ENCODE measurements at regions of chr5 and their contacts with region 1.

Region 1: GRCh38 chr5:55407059-55407684 is 99.4 kb downstream of the MTREX start:
- DNase-seq: no peak
- ATAC-seq: peak; percentile 66 to 87 (median 77)
- H3K4me3 ChIP-seq: no peak overlapping the region
- H3K27ac ChIP-seq: no peak overlapping the region
- H3K4me1 ChIP-seq: peaks cover 0 to 13% (median 0%) of the 10 kb centered on the region in 12 donors
- H3K27me3 ChIP-seq: no peaks in the 10 kb centered on the region
- CTCF ChIP-seq: peak; percentile 61 to 90 (median 76)
- POLR2A ChIP-seq: no peak

Region 2: DNA sequence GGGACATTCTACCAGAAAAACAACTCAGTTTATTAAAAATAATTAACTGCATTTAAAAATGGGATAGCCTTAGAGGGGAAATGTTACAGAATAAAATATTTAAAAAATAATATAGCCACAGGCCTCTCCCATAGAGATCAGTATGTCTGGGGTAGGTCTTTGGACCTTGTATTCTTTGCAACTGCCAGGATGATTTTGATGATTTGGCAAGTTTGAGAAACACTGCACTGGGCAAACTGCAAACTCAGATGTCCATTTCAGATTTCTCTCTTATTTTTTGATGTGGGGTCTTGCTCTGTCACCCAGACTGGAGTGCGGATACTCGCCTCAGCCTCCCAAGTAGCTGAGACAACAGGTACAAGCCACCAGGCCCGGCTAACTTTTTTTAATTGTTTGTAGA is 148.8 kb before region 1 on chr5:
- intact Hi-C with region 1: no loop called
- DNase-seq: no peak
- ATAC-seq: no peak
- H3K4me3 ChIP-seq: no peak overlapping the region
- H3K27ac ChIP-seq: no peak overlapping the region
- H3K4me1 ChIP-seq: no peaks in the 10 kb centered on the region
- H3K27me3 ChIP-seq: no peaks in the 10 kb centered on the region
- CTCF ChIP-seq: no peak
- POLR2A ChIP-seq: no peak

Region 3: DNA sequence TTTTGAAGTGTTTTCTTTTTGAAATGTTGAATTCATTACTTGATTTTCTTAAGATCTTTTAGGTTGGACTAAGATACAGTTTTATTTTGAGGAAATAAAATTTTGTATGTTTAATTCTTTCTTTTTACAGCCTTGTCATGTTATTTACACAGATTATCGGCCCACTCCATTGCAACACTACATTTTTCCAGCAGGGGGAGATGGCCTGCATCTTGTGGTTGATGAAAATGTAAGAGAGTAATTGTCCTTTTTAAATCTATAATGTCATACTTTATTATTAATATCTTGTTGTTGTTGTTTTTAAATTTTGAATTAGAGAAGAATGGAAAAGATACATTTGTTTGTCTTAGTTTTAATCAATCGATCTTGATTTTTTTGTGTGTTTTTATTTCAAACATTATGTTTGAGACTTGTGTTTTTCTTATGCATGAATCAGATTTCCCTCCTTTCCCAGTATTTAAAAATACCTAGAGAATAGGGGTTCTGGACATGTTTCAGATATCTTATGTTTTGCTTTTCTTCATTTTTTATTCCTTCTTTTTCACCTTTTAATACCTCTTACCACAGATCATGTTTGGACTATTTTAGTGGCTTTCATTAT is 62.7 kb before region 1 on chr5:
- intact Hi-C with region 1: loop called in 3 of 10 experiments (anchors 5 to 10 kb)
- DNase-seq: peak in 2 of 5 donors; percentile 32 to 42
- ATAC-seq: peak in 1 of 4 donors; percentile 34
- H3K4me3 ChIP-seq: no peak overlapping the region
- H3K27ac ChIP-seq: no peak overlapping the region
- H3K4me1 ChIP-seq: no peaks in the 10 kb centered on the region
- H3K27me3 ChIP-seq: no peaks in the 10 kb centered on the region
- CTCF ChIP-seq: peak; percentile 79 to 92 (median 88)
- POLR2A ChIP-seq: no peak